CD4-positive, alpha-beta T cell (primary cell): ENCODE measurements at regions of chr22 and their contacts with region 1.

Region 1: DNA sequence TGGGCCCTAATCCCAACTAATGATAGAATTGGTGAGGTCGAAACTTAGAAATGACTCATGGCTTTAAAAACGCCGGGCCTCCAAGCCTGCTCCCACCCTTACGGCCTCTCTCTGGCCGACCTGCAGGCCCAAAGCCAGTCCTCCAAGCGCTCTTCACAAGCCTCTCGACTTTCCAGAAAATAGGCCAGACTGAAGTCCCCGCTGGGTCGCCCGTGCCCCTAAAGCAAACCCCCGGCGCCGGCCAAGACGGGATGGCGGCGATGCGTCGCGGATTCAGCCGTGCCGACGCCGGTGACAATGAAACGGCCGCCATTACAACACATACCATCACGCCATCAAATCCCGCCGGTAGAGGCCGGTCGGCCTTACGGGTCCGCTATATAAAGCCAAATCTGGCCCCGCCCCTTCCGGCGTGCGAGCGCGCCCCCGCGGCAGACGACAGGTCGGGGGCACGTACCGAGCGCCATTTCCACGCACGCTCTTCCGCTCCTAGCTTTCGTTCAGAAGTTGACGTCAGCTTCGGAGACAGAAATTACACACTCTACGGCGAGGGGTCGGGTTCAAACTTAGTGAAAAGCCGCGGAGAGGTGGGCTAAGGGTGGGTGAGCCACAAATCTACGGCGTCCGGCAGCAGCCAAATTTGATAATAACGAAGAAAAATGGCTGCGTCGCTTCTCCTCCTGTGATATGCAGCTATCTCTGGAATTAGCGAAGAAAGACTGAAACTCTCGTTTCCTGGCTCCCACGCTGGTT is at the start of gene RPL3:
- DNase-seq: peak; percentile 96 to 99 (median 98)
- ATAC-seq: peak; percentile 76
- H3K4me3 ChIP-seq: peak within 1 kb of the TSS; percentile 90
- H3K4me3 Mint-ChIP-seq: peak within 1 kb of the TSS; percentile 99
- H3K27ac ChIP-seq: peak within 1 kb of the TSS; percentile 88 to 92
- H3K27ac Mint-ChIP-seq: peak within 1 kb of the TSS; percentile 96
- H3K4me1 ChIP-seq: peaks cover 57% of the 10 kb centered on the region
- H3K4me1 Mint-ChIP-seq: peaks cover 41% of the 10 kb centered on the region
- H3K27me3 ChIP-seq: no peaks in the 10 kb centered on the region
- H3K27me3 Mint-ChIP-seq: no peaks in the 10 kb centered on the region
- CTCF ChIP-seq: no peak
- total RNA-seq, gene RPL3: 3,952 to 3,974 TPM

Region 2: GRCh38 chr22:38872172-38872830 is 447.1 kb before region 1 on chr22 and contains the start of gene CBX6:
- CTCF ChIA-PET with region 1: interaction called, 20 read pairs
- POLR2A ChIA-PET with region 1: interaction called, 15 read pairs
- intact Hi-C with region 1: loop called (anchors 1 to 2 kb)
- DNase-seq: peak; percentile 90 to 98 (median 94)
- ATAC-seq: peak; percentile 75
- H3K4me3 ChIP-seq: peak within 1 kb of the TSS; percentile 82
- H3K4me3 Mint-ChIP-seq: peak within 1 kb of the TSS; percentile 96
- H3K27ac ChIP-seq: peak within 1 kb of the TSS; percentile 58 to 73
- H3K27ac Mint-ChIP-seq: peak within 1 kb of the TSS; percentile 92
- H3K4me1 ChIP-seq: peaks cover 62% of the 10 kb centered on the region
- H3K4me1 Mint-ChIP-seq: peaks cover 63% of the 10 kb centered on the region
- H3K27me3 ChIP-seq: no peaks in the 10 kb centered on the region
- H3K27me3 Mint-ChIP-seq: no peaks in the 10 kb centered on the region
- CTCF ChIP-seq: no peak
- total RNA-seq, gene CBX6: 41.6 to 42.8 TPM

Region 3: DNA sequence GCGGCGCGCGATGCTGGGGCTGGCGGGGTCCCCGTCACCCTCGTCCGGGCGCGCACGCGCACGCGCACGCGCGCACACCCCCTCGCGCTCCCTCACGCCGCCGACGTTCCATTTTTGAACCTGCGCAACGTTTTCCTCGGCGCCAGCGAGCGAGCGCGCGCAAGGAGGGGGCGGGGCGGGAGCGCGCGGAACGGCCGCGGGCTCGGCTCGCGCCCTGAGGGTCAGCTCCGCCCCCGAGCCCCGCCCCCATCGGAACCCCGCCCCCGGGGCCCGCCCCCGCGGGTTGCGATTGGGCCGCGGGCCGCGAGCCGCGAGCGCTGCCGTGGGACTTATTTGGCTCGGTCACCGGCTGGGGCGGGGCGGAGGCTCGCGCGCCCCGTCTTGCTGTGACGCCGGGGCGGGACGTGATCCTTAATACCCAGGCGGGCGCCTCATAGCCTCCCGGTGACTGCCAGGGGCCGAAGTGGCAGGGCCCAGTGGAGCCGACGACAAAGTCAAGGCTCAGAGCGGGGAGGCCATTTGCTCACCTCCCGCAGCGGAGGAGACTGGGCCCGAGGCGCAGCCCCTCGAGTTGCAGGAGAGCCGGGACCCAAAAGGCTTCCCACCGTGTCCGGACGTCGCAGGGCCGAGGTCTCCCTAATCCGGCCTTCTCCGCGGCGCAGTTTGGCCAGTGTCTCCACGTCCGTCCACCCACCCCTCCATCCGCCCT is 166.8 kb before region 1 on chr22 and contains the start of gene CBX7:
- CTCF ChIA-PET with region 1: interaction called, 6 read pairs
- POLR2A ChIA-PET with region 1: interaction called, 156 read pairs
- intact Hi-C with region 1: loop called (anchors 1 to 5 kb)
- DNase-seq: peak; percentile 84 to 98 (median 94)
- ATAC-seq: peak; percentile 83
- H3K4me3 ChIP-seq: peak within 1 kb of the TSS; percentile 94
- H3K4me3 Mint-ChIP-seq: peak within 1 kb of the TSS; percentile 94
- H3K27ac ChIP-seq: peak within 1 kb of the TSS; percentile 83 to 86
- H3K27ac Mint-ChIP-seq: peak within 1 kb of the TSS; percentile 100
- H3K4me1 ChIP-seq: peaks cover 54% of the 10 kb centered on the region
- H3K4me1 Mint-ChIP-seq: peaks cover 39% of the 10 kb centered on the region
- H3K27me3 ChIP-seq: no peaks in the 10 kb centered on the region
- H3K27me3 Mint-ChIP-seq: no peaks in the 10 kb centered on the region
- CTCF ChIP-seq: no peak
- total RNA-seq, gene CBX7: 48.6 to 49.1 TPM

Region 4: DNA sequence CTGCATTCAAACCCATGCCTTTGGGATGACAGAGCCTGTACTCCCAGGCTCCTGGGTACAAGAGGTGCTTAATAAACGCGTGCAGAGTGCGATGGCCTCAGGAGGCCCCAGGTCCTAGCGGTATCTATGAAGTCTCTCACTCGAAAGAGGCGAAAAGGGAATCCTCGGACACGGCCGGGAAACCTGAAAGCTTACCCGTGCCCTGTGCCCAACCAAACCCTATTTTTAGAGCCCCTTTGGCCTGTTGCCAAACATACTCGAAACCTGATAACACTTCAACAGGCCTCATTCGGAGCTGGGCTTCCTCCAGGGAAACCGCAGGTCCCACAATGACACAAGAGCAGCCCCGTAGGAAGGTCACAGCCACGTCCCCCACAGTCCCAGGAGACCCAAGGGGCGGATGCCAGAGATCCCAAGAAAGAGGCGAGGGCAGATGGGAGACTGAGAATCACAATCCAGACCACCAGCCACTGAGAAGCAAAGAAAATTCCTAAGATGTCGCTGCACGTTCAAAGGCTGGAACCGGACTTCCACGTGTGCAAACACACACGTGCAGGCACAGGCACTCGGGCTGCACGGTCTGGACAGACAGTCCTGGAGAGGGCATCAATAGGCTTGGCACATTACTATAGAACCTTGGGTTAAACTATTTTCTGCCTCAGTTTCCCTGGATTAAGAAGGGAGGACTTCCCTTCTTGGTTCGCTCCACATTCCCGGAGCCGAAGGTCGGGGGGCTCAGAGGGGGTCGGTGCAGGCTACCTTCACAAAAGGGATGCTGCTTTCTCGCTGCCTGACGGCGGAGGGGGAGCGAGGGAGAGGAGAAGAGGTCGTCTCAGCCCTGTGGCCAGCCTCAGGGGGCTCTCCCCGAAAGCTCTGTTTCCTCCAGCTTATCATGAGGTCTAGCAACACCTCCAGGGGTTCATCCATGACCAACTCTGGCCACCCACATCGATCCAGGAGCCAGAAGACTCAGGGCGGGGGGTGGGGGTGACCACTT is 82.8 kb before region 1 on chr22:
- CTCF ChIA-PET with region 1: no interaction called
- POLR2A ChIA-PET with region 1: interaction called, 96 read pairs
- intact Hi-C with region 1: loop called (anchors 5 kb)
- DNase-seq: peak in 11 of 14 experiments; percentile 25 to 82 (median 38)
- ATAC-seq: peak; percentile 9
- H3K4me3 ChIP-seq: peak overlapping the region; percentile 12
- H3K4me3 Mint-ChIP-seq: peak overlapping the region; percentile 83
- H3K27ac ChIP-seq: no peak overlapping the region
- H3K27ac Mint-ChIP-seq: peak overlapping the region; percentile 6
- H3K4me1 ChIP-seq: peaks cover 80% of the 10 kb centered on the region
- H3K4me1 Mint-ChIP-seq: peaks cover 76% of the 10 kb centered on the region
- H3K27me3 ChIP-seq: peaks cover 24 to 28% of the 10 kb centered on the region in 2 experiments
- H3K27me3 Mint-ChIP-seq: peaks cover 37% of the 10 kb centered on the region
- CTCF ChIP-seq: no peak

Region 5: GRCh38 chr22:39266398-39267030 is 52.9 kb before region 1 on chr22:
- CTCF ChIA-PET with region 1: no interaction called
- POLR2A ChIA-PET with region 1: no interaction called
- intact Hi-C with region 1: no loop called
- DNase-seq: peak in 2 of 14 experiments; percentile 53 to 66
- ATAC-seq: no peak
- H3K4me3 ChIP-seq: no peak overlapping the region
- H3K4me3 Mint-ChIP-seq: no peak overlapping the region
- H3K27ac ChIP-seq: no peak overlapping the region
- H3K27ac Mint-ChIP-seq: no peak overlapping the region
- H3K4me1 ChIP-seq: no peaks in the 10 kb centered on the region
- H3K4me1 Mint-ChIP-seq: no peaks in the 10 kb centered on the region
- H3K27me3 ChIP-seq: no peaks in the 10 kb centered on the region
- H3K27me3 Mint-ChIP-seq: no peaks in the 10 kb centered on the region
- CTCF ChIP-seq: no peak

Region 6: GRCh38 chr22:39349506-39349966 is 30.1 kb after region 1 on chr22:
- CTCF ChIA-PET with region 1: no interaction called
- POLR2A ChIA-PET with region 1: interaction called, 10 read pairs
- intact Hi-C with region 1: no loop called
- DNase-seq: peak in 6 of 14 experiments; percentile 6 to 66 (median 23)
- ATAC-seq: peak; percentile 47
- H3K4me3 ChIP-seq: peak overlapping the region; percentile 58
- H3K4me3 Mint-ChIP-seq: peak overlapping the region; percentile 83
- H3K27ac ChIP-seq: no peak overlapping the region
- H3K27ac Mint-ChIP-seq: no peak overlapping the region
- H3K4me1 ChIP-seq: peaks cover 21% of the 10 kb centered on the region
- H3K4me1 Mint-ChIP-seq: peaks cover 15% of the 10 kb centered on the region
- H3K27me3 ChIP-seq: peaks cover 20 to 26% of the 10 kb centered on the region in 2 experiments
- H3K27me3 Mint-ChIP-seq: peaks cover 12% of the 10 kb centered on the region
- CTCF ChIP-seq: no peak

Region 7: GRCh38 chr22:39405346-39406085 is 86.1 kb after region 1 on chr22:
- CTCF ChIA-PET with region 1: no interaction called
- POLR2A ChIA-PET with region 1: interaction called, 24 read pairs
- intact Hi-C with region 1: no loop called
- DNase-seq: peak in 2 of 14 experiments; percentile 11 to 15
- ATAC-seq: peak; percentile 93
- H3K4me3 ChIP-seq: no peak overlapping the region
- H3K4me3 Mint-ChIP-seq: peak overlapping the region; percentile 9
- H3K27ac ChIP-seq: no peak overlapping the region
- H3K27ac Mint-ChIP-seq: no peak overlapping the region
- H3K4me1 ChIP-seq: peaks cover 35% of the 10 kb centered on the region
- H3K4me1 Mint-ChIP-seq: peaks cover 70% of the 10 kb centered on the region
- H3K27me3 ChIP-seq: no peaks in the 10 kb centered on the region
- H3K27me3 Mint-ChIP-seq: no peaks in the 10 kb centered on the region
- CTCF ChIP-seq: no peak

Region 8: GRCh38 chr22:39877079-39877845 is 557.8 kb after region 1 on chr22:
- CTCF ChIA-PET with region 1: no interaction called
- POLR2A ChIA-PET with region 1: no interaction called
- intact Hi-C with region 1: no loop called
- DNase-seq: no peak
- ATAC-seq: no peak
- H3K4me3 ChIP-seq: no peak overlapping the region
- H3K4me3 Mint-ChIP-seq: no peak overlapping the region
- H3K27ac ChIP-seq: no peak overlapping the region
- H3K27ac Mint-ChIP-seq: no peak overlapping the region
- H3K4me1 ChIP-seq: no peaks in the 10 kb centered on the region
- H3K4me1 Mint-ChIP-seq: no peaks in the 10 kb centered on the region
- H3K27me3 ChIP-seq: no peaks in the 10 kb centered on the region
- H3K27me3 Mint-ChIP-seq: no peaks in the 10 kb centered on the region
- CTCF ChIP-seq: no peak

Region 9: DNA sequence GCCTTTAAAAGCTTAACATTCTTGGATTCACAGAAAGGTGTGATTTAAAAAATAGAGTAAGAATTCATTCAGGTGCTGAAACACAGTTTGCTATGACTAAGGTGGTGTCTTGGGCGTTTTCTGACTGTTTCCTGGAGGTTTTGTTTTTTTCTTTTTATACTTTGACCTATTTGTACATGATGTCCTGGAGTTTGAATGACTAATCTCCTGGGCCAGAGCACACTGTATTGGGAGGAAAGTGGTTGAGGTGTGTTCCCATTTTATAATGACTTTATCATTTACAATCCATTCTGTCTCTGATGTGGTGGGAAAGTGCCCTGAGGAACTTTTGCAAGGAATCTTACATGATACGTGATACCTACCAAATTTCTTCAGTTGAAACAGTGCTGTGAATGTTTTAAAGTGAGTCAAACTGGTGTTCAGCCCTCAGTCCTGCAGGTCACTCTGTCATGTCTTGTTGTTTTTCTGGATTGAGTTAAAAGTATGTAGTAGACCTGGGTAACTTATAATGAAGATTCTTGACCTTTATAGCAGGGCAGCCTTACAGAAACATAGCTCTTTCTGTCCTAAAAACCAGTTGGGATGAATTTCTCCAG is 939.1 kb after region 1 on chr22:
- CTCF ChIA-PET with region 1: no interaction called
- POLR2A ChIA-PET with region 1: no interaction called
- intact Hi-C with region 1: no loop called
- DNase-seq: peak in 4 of 14 experiments; percentile 40 to 59 (median 42)
- ATAC-seq: peak; percentile 87
- H3K4me3 ChIP-seq: peak overlapping the region; percentile 1
- H3K4me3 Mint-ChIP-seq: peak overlapping the region; percentile 4
- H3K27ac ChIP-seq: peak overlapping the region; percentile 2 to 18
- H3K27ac Mint-ChIP-seq: peak overlapping the region; percentile 74
- H3K4me1 ChIP-seq: peaks cover 50% of the 10 kb centered on the region
- H3K4me1 Mint-ChIP-seq: peaks cover 71% of the 10 kb centered on the region
- H3K27me3 ChIP-seq: no peaks in the 10 kb centered on the region
- H3K27me3 Mint-ChIP-seq: no peaks in the 10 kb centered on the region
- CTCF ChIP-seq: no peak